ENCODE measurements at regions of chr10 and their contacts with region 1.

Region 1: DNA sequence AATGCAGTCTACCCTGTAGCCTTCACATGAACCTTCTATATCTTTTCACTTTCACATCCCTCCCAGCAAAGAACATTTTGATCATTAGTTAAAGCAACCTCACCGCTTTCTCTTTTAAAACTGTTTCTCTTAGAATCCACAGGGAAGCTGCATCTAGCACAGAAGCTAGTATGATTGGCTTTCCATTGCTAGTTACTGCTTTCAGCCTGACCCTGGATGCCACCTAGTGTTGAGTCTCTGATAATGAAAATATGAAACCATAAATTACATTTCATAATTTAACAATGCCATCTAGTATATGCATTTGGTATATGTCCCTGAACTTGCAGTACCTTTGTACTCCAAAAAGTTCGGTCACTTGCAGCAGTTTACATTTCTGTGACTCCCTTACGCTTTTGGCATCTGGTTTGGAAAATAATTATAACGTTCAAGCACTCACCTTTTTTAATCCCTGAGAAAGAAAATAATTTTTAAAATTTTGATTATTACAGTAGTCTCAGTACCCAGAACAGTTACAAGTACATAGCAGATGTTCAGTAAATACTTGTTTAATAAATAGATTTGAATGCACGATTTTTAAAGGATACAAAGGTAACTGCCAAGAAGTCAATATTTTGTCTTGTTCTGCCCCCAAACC is 22.7 kb downstream of the CISD1 start:
- DNase-seq: peak in 1 of 5 donors; percentile 31
- H3K4me3 ChIP-seq: no peak overlapping the region
- H3K27ac ChIP-seq: no peak overlapping the region
- H3K4me1 ChIP-seq: no peaks in the 10 kb centered on the region
- H3K27me3 ChIP-seq: no peaks in the 10 kb centered on the region
- CTCF ChIP-seq: peak; percentile 47 to 69 (median 66)
- EP300 ChIP-seq: no peak
- POLR2A ChIP-seq: no peak

Region 2: DNA sequence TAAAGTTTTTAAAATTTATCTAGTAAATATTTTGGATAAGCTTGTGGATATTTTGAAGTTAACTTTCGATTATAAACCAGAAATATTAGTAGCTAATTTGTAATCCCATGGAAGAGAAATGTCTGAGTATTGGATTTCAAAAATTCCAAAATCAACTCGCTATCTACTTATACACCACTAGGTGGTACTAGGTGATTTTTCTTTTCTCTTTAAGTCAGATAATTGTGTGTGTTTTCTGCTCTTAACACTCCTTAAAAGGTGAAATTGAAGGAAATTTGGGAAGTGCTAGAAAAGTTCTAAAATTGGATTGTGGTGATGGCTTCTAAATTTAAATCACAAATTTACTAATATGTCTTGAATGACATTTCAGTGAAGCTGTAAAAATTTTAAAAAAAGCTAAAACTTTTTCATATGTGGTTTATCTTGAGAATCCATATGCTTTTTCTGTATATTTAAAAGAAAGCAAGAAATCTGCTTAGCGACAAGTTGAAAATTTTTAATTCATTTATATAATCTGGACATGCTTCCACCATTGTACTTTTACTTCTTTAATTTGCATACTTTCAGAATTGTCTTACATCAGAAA is 114.2 kb before region 1 on chr10:
- intact Hi-C with region 1: loop called (anchors 5 to 10 kb)
- DNase-seq: no peak
- H3K4me3 ChIP-seq: no peak overlapping the region
- H3K27ac ChIP-seq: no peak overlapping the region
- H3K4me1 ChIP-seq: no peaks in the 10 kb centered on the region
- H3K27me3 ChIP-seq: no peaks in the 10 kb centered on the region
- CTCF ChIP-seq: peak; percentile 9 to 51 (median 43)
- EP300 ChIP-seq: no peak
- POLR2A ChIP-seq: no peak

Region 3: GRCh38 chr10:58258977-58259692 is 32.5 kb before region 1 on chr10:
- intact Hi-C with region 1: no loop called
- DNase-seq: no peak
- H3K4me3 ChIP-seq: no peak overlapping the region
- H3K27ac ChIP-seq: no peak overlapping the region
- H3K4me1 ChIP-seq: no peaks in the 10 kb centered on the region
- H3K27me3 ChIP-seq: no peaks in the 10 kb centered on the region
- CTCF ChIP-seq: no peak
- EP300 ChIP-seq: no peak
- POLR2A ChIP-seq: no peak

Region 4: DNA sequence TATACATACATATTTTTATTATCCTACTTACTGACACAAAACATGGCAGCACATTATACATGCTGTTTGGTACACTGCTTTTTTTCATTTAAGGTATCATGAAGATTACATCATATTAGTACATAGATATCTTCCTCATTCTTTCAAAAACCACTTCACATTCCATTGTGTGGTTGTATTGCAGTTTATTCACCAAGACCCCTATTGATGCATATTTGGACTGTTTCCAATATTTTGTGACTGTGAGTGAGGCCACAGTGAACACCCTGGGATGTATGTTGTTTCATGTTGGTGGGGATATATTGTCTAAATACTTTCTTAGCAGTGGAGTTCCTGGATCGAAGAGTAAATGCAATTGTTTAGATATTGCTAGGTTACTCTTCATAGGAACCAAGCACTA is 132.5 kb after region 1 on chr10:
- intact Hi-C with region 1: no loop called
- DNase-seq: no peak
- H3K4me3 ChIP-seq: no peak overlapping the region
- H3K27ac ChIP-seq: no peak overlapping the region
- H3K4me1 ChIP-seq: no peaks in the 10 kb centered on the region
- H3K27me3 ChIP-seq: no peaks in the 10 kb centered on the region
- CTCF ChIP-seq: no peak
- EP300 ChIP-seq: no peak
- POLR2A ChIP-seq: no peak